Heart left ventricle (tissue), 16 donors: ENCODE measurements at regions of chrX and their contacts with region 1.

Region 1: DNA sequence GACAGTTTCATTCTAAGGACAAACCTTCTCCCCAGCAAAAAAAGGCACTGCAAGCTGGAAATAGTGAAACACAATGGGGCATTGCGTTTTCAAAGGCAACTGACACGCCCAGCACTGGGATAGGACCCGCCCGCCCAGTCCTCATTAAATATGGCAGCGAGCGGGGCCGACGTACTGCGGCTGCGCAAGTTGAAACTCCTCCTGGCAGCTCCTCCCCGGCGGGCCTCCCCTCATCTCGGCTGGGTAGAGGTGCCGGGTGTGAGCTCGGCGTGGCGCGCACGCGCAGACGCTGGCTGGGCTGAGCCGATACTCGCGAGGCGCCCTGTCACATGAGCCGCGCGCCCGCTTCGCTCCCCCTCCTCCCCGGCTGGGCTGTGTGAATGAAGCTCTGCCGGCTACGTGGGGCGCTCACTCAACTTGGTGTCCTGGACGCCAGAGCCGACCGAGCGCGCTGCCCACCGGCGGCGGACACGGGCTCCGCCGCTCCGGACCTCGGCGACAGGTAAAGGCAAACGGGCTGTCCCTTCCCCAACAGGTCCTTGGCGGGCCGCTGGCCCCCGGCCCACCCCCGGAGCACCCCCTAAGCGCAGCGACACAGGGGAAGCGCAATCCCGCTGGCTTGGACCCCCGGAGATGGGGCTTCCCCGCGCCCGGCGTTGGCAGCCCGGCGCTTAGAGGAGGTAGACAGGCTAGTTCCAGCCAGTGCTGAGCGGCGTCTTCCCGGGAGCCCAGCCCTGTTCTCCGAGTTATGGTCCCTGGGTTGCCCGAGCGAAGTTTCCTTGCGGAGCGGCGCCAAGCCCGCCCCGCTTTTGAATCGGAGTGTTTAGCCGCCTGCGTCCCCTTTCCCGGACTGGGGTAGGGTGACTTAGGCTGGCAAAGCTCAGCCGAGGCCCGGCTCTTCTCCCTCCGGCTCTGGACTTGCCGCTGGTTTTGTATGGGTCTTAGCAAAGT is at the start of gene CLCN5:
- DNase-seq: peak; percentile 93 to 98 (median 96)
- ATAC-seq: peak; percentile 97 to 100 (median 98)
- H3K4me3 ChIP-seq: peak within 1 kb of the TSS; percentile 20 to 91 (median 75)
- H3K27ac ChIP-seq: peak within 1 kb of the TSS in 11 of 12 donors; percentile 40 to 82 (median 74)
- H3K4me1 ChIP-seq: peaks cover 0 to 11% (median 0%) of the 10 kb centered on the region in 12 donors
- H3K27me3 ChIP-seq: peaks cover 0 to 8% (median 0%) of the 10 kb centered on the region in 9 donors
- CTCF ChIP-seq: no peak
- POLR2A ChIP-seq: peak in 1 of 2 donors; percentile 49
- total RNA-seq, gene CLCN5: 1.3 to 6.0 (median 2.5) TPM

Region 2: DNA sequence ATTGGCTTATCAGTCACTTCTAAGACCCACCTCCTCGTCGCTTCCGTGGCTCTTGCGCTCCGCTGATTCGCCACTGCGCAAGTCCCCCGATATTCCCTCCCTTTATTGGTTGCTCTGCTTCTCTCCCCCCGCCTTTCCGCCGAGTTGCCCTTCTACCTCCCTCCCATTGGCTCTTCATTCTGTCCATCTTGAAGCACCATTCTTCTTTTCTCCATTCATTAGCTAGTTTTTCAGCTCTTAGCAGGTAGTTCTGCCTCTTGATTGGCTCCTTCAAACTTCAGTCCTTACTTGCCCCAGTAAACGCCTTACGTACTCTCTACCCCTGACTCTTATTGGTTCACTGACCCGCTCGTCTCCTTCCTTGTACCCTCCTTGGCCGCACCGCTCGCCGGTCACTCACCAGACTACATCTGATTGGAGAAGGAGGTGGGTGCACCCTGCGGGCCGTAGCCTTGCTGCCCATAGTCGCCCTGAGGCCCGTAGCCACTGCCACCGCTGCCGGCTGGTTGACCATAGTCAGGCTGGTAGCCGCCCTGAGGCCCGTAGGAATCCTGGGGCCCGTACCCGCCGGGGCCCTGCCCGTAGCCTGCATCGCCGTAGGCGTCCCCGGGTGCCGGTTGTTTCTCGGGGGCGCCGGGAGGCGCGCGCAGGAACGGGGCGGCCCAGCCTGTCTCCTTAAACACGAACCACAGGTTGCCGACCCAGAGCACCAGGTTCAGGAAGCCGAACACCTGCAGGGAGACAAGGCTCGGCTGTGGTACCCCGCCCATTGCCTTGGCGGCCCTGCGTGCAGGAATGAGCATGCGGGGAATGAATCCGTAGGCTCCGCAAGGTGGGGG is 731.3 kb before region 1 on chrX:
- intact Hi-C with region 1: loop called in 1 of 10 experiments (anchors 10 kb)
- DNase-seq: peak; percentile 91 to 94 (median 94)
- ATAC-seq: peak; percentile 90 to 93 (median 92)
- H3K4me3 ChIP-seq: peak overlapping the region; percentile 57 to 96 (median 72)
- H3K27ac ChIP-seq: peak overlapping the region; percentile 3 to 92 (median 87)
- H3K4me1 ChIP-seq: peaks cover 0 to 14% (median 2%) of the 10 kb centered on the region in 12 donors
- H3K27me3 ChIP-seq: no peaks in the 10 kb centered on the region
- CTCF ChIP-seq: peak in 1 of 12 donors; percentile 8
- POLR2A ChIP-seq: peak in 1 of 2 donors; percentile 89

Region 3: DNA sequence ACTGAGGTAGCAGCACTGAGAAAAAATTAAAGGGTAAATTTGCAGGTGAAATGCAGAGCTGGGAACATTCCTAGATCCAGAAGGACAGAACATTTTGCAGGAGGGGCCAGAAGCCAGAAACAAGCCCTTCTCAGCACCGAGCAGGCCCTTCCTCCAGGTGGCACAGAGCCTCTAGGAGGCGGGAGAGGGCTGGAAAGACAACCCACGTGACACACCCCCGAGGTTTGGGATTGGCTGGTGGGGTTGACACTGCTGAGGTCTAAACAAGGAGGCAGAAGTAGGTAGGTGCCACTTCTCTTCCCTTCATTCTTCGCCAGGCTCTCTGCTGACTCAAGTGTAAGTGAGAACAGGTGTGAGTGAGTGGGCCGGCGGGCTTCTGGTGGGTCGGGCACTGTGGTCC is 93.5 kb before region 1 on chrX and contains the start of gene PAGE4:
- intact Hi-C with region 1: no loop called
- DNase-seq: no peak
- ATAC-seq: no peak
- H3K4me3 ChIP-seq: no peak within 1 kb of the TSS
- H3K27ac ChIP-seq: no peak within 1 kb of the TSS
- H3K4me1 ChIP-seq: no peaks in the 10 kb centered on the region
- H3K27me3 ChIP-seq: peaks cover 0 to 73% (median 0%) of the 10 kb centered on the region in 9 donors
- CTCF ChIP-seq: no peak
- POLR2A ChIP-seq: no peak
- total RNA-seq, gene PAGE4: not detected

Region 4: DNA sequence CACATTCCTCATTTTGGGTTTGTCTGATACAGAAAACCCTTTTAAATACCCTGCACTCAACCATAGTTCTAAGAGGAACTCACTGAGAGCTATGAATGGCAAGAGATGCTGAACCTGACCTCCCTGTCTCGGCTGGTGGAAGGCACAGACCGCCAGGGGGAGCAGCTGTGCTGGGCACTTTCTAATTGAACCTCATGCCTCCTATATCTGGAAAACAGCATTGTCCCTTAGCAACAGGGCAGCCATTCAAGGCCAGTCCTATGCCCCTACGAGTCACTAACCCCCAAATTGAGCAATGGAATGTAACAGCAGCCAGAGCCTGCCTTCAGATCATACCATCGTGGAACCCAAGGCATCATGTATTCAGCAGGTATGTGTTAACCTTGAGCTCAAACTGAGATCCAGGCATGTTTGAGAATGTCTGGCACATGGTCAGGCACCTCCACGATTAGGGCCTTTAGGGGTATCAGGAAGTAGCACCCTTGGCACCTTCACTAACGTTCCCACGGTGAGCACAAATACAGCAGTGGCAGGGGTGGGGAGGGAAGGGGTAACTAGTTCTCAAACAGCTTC is 38.2 kb before region 1 on chrX:
- intact Hi-C with region 1: loop called in 1 of 10 experiments (anchors 5 kb)
- DNase-seq: peak; percentile 27 to 67 (median 53)
- ATAC-seq: peak in 3 of 4 donors; percentile 33 to 64 (median 63)
- H3K4me3 ChIP-seq: no peak overlapping the region
- H3K27ac ChIP-seq: no peak overlapping the region
- H3K4me1 ChIP-seq: peaks cover 0 to 5% (median 0%) of the 10 kb centered on the region in 12 donors
- H3K27me3 ChIP-seq: no peaks in the 10 kb centered on the region
- CTCF ChIP-seq: peak; percentile 40 to 73 (median 60)
- POLR2A ChIP-seq: no peak

Region 5: GRCh38 chrX:49988143-49988542 is 65.6 kb after region 1 on chrX:
- intact Hi-C with region 1: no loop called
- DNase-seq: no peak
- ATAC-seq: no peak
- H3K4me3 ChIP-seq: no peak overlapping the region
- H3K27ac ChIP-seq: no peak overlapping the region
- H3K4me1 ChIP-seq: peaks cover 0 to 4% (median 0%) of the 10 kb centered on the region in 12 donors
- H3K27me3 ChIP-seq: peaks cover 0 to 13% (median 0%) of the 10 kb centered on the region in 9 donors
- CTCF ChIP-seq: no peak
- POLR2A ChIP-seq: no peak

Region 6: GRCh38 chrX:50036426-50036825 is 113.9 kb after region 1 on chrX:
- intact Hi-C with region 1: loop called in 1 of 10 experiments (anchors 5 kb)
- DNase-seq: no peak
- ATAC-seq: peak in 3 of 4 donors; percentile 54 to 64 (median 55)
- H3K4me3 ChIP-seq: peak overlapping the region in 6 of 12 donors; percentile 1 to 39 (median 26)
- H3K27ac ChIP-seq: peak overlapping the region in 9 of 12 donors; percentile 14 to 48 (median 30)
- H3K4me1 ChIP-seq: peaks cover 0 to 17% (median 1%) of the 10 kb centered on the region in 12 donors
- H3K27me3 ChIP-seq: no peaks in the 10 kb centered on the region
- CTCF ChIP-seq: no peak
- POLR2A ChIP-seq: no peak